ENCODE measurements at regions of chr13 and their contacts with region 1.

Region 1: GRCh38 chr13:40445557-40445990 is 220.9 kb downstream of the FOXO1 start:
- DNase-seq: peak; percentile 80
- ATAC-seq: peak; percentile 96
- H3K4me3 Mint-ChIP-seq: peak overlapping the region; percentile 66
- H3K27ac Mint-ChIP-seq: peak overlapping the region; percentile 95
- H3K4me1 Mint-ChIP-seq: peaks cover 75% of the 10 kb centered on the region
- H3K27me3 Mint-ChIP-seq: no peaks in the 10 kb centered on the region
- CTCF ChIP-seq: no peak

Region 2: GRCh38 chr13:38577048-38577447 is 1868.5 kb before region 1 on chr13:
- CTCF ChIA-PET with region 1: no interaction called
- POLR2A ChIA-PET with region 1: no interaction called
- intact Hi-C with region 1: no loop called
- DNase-seq: no peak
- ATAC-seq: no peak
- H3K4me3 Mint-ChIP-seq: no peak overlapping the region
- H3K27ac Mint-ChIP-seq: no peak overlapping the region
- H3K4me1 Mint-ChIP-seq: no peaks in the 10 kb centered on the region
- H3K27me3 Mint-ChIP-seq: no peaks in the 10 kb centered on the region
- CTCF ChIP-seq: no peak

Region 3: GRCh38 chr13:40206241-40207000 is 239.2 kb before region 1 on chr13:
- CTCF ChIA-PET with region 1: no interaction called
- POLR2A ChIA-PET with region 1: interaction called, 18 read pairs
- intact Hi-C with region 1: loop called (anchors 1 kb)
- DNase-seq: peak; percentile 52
- ATAC-seq: peak; percentile 66
- H3K4me3 Mint-ChIP-seq: peak overlapping the region; percentile 76
- H3K27ac Mint-ChIP-seq: peak overlapping the region; percentile 100
- H3K4me1 Mint-ChIP-seq: peaks cover 72% of the 10 kb centered on the region
- H3K27me3 Mint-ChIP-seq: no peaks in the 10 kb centered on the region
- CTCF ChIP-seq: no peak

Region 4: DNA sequence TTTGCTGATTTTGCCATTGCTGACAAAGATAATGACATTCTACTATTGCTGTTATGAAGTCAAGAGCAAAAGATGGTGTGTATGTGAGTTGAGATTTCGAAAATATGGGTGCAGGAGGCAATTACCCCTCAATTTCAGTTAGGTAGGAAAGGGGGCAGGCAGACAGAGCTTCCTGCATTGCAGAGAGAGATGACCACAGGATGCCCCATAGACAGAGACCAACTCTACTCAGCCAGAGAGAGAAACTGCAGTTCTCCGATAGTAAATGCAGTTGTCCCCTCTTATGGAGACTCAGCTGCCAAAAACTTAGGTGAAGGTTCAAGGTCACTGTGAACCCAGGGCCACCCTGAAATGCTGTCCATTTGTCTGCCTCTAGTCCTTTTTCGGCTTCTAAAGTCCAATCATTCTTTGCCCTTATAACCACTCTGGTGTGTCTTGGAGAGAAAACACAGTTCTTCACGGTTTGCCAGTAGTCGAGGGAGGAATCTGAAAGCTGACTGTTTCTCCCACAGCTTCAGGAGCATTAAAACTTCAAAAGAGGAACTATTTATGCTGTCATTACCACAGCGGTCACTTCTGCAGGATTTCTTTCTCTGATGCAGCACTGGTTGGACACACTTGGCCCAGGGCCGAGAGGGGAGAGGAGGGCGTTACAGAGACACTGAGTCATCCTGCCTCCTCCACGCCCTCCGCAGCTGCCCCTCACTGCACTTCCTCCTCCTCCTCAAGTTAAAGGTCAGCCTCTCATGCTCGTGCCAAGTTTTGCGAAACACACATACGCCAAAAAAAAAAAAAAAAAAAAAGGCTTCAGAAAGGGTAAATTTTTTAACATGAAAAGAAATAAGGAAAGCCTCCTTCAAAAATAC is 43.4 kb before region 1 on chr13:
- CTCF ChIA-PET with region 1: no interaction called
- POLR2A ChIA-PET with region 1: interaction called, 7 read pairs
- intact Hi-C with region 1: loop called (anchors 1 kb)
- DNase-seq: peak; percentile 51
- ATAC-seq: peak; percentile 100
- H3K4me3 Mint-ChIP-seq: peak overlapping the region; percentile 71
- H3K27ac Mint-ChIP-seq: peak overlapping the region; percentile 82
- H3K4me1 Mint-ChIP-seq: peaks cover 29% of the 10 kb centered on the region
- H3K27me3 Mint-ChIP-seq: no peaks in the 10 kb centered on the region
- CTCF ChIP-seq: no peak

Region 5: DNA sequence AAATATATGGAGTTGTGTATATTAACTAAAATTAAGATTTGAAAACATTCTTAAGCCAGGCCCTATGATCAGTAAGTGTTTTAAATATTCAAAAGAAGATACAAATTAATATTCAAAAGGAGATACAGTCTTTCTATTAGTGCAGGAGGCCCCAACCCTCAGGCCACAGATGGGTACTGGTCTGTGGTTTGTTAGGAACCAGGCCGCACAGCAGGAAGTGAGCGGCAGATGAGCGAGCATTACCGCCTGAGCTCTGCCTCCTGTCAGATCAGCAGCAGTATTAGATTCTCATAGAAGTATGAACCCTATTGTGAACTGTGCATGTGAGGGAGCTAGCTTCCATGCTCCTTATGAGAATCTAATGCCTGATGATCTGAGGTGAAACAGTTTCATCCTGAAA is 12.0 kb before region 1 on chr13:
- CTCF ChIA-PET with region 1: interaction called, 3 read pairs
- POLR2A ChIA-PET with region 1: interaction called, 88 read pairs
- intact Hi-C with region 1: loop called (anchors 1 kb)
- DNase-seq: no peak
- ATAC-seq: peak; percentile 68
- H3K4me3 Mint-ChIP-seq: peak overlapping the region; percentile 60
- H3K27ac Mint-ChIP-seq: peak overlapping the region; percentile 89
- H3K4me1 Mint-ChIP-seq: peaks cover 92% of the 10 kb centered on the region
- H3K27me3 Mint-ChIP-seq: no peaks in the 10 kb centered on the region
- CTCF ChIP-seq: no peak

Region 6: DNA sequence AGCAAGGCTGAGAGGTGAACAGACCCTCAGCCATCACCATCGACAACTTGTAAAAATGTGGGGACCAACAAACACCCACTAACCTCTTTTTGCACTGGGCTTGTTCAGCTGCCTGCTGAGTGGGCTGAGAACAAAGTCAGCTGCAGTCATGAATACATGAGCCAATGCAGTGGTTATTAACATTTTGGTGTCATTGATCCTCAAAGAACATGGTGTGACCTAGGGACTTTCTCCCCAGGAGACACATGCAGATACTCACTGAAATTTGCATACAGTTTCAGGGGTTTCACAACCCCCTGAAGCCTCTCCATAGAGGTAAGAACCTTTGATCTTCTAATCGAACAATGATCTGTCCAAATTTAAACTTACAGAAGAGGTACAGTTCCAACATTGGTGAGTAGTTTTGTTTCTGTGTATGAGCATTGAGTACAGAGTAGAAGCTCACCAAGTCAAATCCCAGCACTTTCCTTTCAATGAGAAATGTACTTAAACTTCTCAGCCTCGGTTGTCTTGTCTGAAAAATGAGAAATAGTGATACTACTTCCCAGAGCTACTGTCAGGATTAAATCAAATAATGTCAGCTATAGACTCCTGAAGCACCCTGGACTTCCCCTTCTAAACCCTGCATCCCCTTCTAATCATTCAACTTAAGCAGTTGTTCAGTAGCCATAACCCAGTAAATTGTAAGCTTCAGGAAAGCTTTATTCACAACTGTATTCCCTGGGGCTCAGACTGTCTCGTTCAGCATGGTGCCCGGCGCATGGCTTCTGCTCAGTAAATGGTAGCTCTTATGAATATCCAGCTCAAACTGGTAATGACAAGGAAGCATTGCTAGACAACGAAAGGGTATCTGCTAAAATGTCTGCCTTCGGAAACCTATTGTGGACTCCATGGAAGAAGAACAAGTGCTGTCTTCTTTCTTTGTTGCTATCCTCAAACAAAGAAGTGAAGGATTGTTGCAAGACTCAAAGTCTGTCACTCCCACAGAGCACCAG is 72.2 kb after region 1 on chr13:
- CTCF ChIA-PET with region 1: no interaction called
- POLR2A ChIA-PET with region 1: no interaction called
- intact Hi-C with region 1: loop called (anchors 5 kb)
- DNase-seq: no peak
- ATAC-seq: peak; percentile 70
- H3K4me3 Mint-ChIP-seq: peak overlapping the region; percentile 44
- H3K27ac Mint-ChIP-seq: peak overlapping the region; percentile 67
- H3K4me1 Mint-ChIP-seq: peaks cover 43% of the 10 kb centered on the region
- H3K27me3 Mint-ChIP-seq: no peaks in the 10 kb centered on the region
- CTCF ChIP-seq: no peak